ENCODE measurements at regions of chr20 and their contacts with region 1.

Region 1: GRCh38 chr20:4449957-4450715 is 271.6 kb upstream of the PRND start:
- DNase-seq: peak; percentile 71
- ATAC-seq: peak; percentile 87
- H3K4me3 ChIP-seq: no peak overlapping the region
- H3K27ac ChIP-seq: peak overlapping the region; percentile 38; the same call in 1 of the 2 replicates
- H3K4me1 ChIP-seq: peaks cover 10% of the 10 kb centered on the region
- H3K27me3 ChIP-seq: no peaks in the 10 kb centered on the region
- CTCF ChIP-seq: peak; percentile 34
- POLR2A ChIP-seq: no peak
- RAD21 ChIP-seq: 0 out of 2 replicates have a peak, but pooled peaks have one; percentile 16

Region 2: GRCh38 chr20:3777716-3778629 is 672.2 kb before region 1 on chr20:
- CTCF ChIA-PET with region 1: no interaction called
- POLR2A ChIA-PET with region 1: no interaction called
- dilution Hi-C with region 1: no loop called
- in situ Hi-C with region 1: no loop called
- intact Hi-C with region 1: no loop called
- DNase-seq: no peak
- ATAC-seq: peak; percentile 79
- H3K4me3 ChIP-seq: peak overlapping the region; percentile 39
- H3K27ac ChIP-seq: no peak overlapping the region
- H3K4me1 ChIP-seq: peaks cover 4% of the 10 kb centered on the region; the same call in 1 of the 2 replicates
- H3K27me3 ChIP-seq: peaks cover 9% of the 10 kb centered on the region; the same call in 1 of the 2 replicates
- CTCF ChIP-seq: no peak
- POLR2A ChIP-seq: no peak
- RAD21 ChIP-seq: no peak

Region 3: DNA sequence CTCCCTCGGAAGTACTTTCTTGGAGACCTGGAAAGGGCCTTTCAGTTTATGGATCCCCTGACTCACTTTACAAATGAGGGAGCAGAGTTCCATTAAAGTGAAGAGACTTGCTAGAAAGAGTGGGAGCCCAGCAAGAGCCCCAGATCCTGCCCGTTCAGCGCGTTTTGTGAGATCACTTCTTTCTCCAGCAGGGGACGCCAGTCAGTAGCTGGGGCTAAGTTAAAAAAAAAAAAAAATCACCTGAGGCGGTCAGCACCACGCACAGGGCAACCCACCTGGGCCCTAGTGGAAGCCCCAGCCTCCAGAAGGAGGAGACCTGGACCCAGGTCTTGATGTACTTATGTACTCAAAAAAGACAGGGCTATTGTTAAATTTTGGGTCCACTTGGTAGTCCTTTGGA is 160.3 kb before region 1 on chr20:
- CTCF ChIA-PET with region 1: no interaction called
- POLR2A ChIA-PET with region 1: no interaction called
- dilution Hi-C with region 1: no loop called
- in situ Hi-C with region 1: no loop called
- intact Hi-C with region 1: no loop called
- DNase-seq: no peak
- ATAC-seq: no peak
- H3K4me3 ChIP-seq: no peak overlapping the region
- H3K27ac ChIP-seq: no peak overlapping the region
- H3K4me1 ChIP-seq: no peaks in the 10 kb centered on the region
- H3K27me3 ChIP-seq: 0 out of 2 replicates have a peak, but pooled peaks cover under 1% of the 10 kb centered on the region
- CTCF ChIP-seq: no peak
- POLR2A ChIP-seq: no peak
- RAD21 ChIP-seq: no peak

Region 4: GRCh38 chr20:4490606-4491280 is 40.6 kb after region 1 on chr20:
- CTCF ChIA-PET with region 1: no interaction called
- POLR2A ChIA-PET with region 1: no interaction called
- dilution Hi-C with region 1: no loop called
- in situ Hi-C with region 1: no loop called
- intact Hi-C with region 1: loop called (anchors 2 kb)
- DNase-seq: peak; percentile 41
- ATAC-seq: peak; percentile 52
- H3K4me3 ChIP-seq: no peak overlapping the region
- H3K27ac ChIP-seq: no peak overlapping the region
- H3K4me1 ChIP-seq: peaks cover 17% of the 10 kb centered on the region
- H3K27me3 ChIP-seq: no peaks in the 10 kb centered on the region
- CTCF ChIP-seq: no peak
- POLR2A ChIP-seq: no peak
- RAD21 ChIP-seq: no peak

Measured in IMR-90 (cell line).